ENCODE measurements at regions of chr18 and their contacts with region 1.

Region 1: DNA sequence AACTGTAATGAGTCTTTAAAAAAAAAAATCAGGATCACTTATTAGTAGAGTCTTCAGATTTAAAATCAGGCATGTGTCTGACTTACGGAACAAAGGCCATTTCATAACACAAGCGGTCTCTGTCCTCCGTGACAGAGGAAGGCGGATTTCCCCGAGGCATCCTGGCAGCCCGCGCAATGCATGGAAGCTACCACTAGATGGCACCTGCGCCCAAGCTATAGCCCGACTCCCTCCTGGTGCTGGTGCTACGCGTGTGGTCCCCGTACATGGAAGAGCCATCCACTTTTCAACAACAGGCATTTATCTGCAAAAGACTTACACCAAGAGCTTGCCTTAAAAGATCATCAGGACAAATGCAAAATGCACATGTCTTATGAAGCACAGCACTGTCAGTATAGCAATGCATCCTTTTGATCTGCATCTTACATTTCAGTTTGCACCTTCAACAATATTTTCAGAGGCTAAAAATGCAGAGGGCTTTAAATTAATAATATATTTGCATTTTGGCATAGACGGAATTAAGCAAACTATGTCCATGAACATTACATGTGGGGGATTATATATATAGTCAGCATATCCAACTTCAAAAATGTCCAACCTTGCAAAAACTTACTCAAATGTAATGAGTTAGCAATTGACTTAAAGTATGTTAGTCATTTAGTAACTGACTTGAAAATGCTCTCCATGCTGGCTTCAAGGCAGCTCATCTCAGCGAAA is 96.0 kb downstream of the ZNF516 start:
- DNase-seq: peak; percentile 93
- H3K4me3 Mint-ChIP-seq: no peak overlapping the region
- H3K27ac Mint-ChIP-seq: no peak overlapping the region
- H3K4me1 Mint-ChIP-seq: peaks cover 4% of the 10 kb centered on the region
- H3K27me3 Mint-ChIP-seq: peaks cover 9% of the 10 kb centered on the region

Region 2: DNA sequence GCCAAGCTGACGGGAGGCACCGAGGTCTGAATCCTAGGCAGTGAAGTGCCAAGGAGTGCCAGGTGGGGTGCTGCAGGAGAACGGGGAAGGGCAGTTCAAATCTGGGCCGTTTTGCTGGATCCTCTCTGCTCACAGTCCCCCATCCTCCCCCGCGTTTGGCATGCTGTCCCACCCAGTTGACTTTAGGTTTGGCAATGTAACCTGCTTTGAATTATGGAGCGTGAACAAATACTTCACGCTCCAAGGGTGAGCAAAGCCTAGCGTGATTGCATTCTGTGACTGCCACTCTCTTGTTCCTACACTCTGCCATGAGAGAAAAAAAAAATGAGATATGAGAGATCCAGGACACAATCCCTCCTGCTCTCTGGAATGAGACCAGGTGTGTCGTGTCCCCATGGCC is 286.0 kb before region 1 on chr18:
- intact Hi-C with region 1: no loop called
- DNase-seq: no peak
- H3K4me3 Mint-ChIP-seq: no peak overlapping the region
- H3K27ac Mint-ChIP-seq: no peak overlapping the region
- H3K4me1 Mint-ChIP-seq: no peaks in the 10 kb centered on the region
- H3K27me3 Mint-ChIP-seq: no peaks in the 10 kb centered on the region

Region 3: DNA sequence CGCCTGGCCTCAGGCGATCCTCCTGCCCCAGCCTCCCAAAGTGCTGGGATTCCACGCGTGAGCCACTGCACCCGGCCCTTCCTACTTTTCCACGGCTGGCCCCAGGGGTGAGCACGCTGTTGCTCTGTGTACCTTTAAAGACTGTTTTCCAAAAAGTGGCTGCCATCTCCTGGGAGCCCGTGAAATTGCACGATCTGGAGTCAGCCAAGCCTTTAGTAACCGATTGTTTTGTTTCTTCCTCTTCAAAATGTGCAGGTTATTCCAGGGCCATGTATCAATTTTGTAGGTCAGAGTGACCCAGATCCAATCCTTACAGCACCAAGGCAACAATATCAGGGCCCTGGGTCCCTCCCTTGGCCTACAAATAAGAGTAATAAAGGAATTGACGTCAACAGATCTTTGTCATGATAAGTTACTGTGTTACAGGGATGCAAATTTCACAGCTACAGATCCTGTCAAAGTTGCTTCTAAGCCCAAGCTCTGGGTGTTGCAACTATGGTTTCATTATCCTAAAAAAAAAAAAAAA is 287.7 kb after region 1 on chr18:
- intact Hi-C with region 1: loop called (anchors 1 kb)
- DNase-seq: peak; percentile 77
- H3K4me3 Mint-ChIP-seq: no peak overlapping the region
- H3K27ac Mint-ChIP-seq: peak overlapping the region; percentile 68
- H3K4me1 Mint-ChIP-seq: peaks cover 7% of the 10 kb centered on the region
- H3K27me3 Mint-ChIP-seq: peaks cover 28% of the 10 kb centered on the region

Region 4: GRCh38 chr18:76709659-76710645 is 310.9 kb after region 1 on chr18:
- intact Hi-C with region 1: loop called (anchors 1 kb)
- DNase-seq: peak; percentile 90
- H3K4me3 Mint-ChIP-seq: no peak overlapping the region
- H3K27ac Mint-ChIP-seq: no peak overlapping the region
- H3K4me1 Mint-ChIP-seq: peaks cover 8% of the 10 kb centered on the region
- H3K27me3 Mint-ChIP-seq: peaks cover 22% of the 10 kb centered on the region